Activated T-helper 1 cell treated with anti-CD3 and anti-CD28 coated beads, Interleukin-12 subunit alpha, Interleukin-12 subunit beta, Interleukin-2, Interleukin-4 antibody, amounts not matched to agents 30 ng/mL and 10 ng/mL and 1 ng/mL, durations not matched to agents 14 hours and 24 hours and 36 hours (primary cell): ENCODE measurements at regions of chr6 and their contacts with region 1.

Region 1: DNA sequence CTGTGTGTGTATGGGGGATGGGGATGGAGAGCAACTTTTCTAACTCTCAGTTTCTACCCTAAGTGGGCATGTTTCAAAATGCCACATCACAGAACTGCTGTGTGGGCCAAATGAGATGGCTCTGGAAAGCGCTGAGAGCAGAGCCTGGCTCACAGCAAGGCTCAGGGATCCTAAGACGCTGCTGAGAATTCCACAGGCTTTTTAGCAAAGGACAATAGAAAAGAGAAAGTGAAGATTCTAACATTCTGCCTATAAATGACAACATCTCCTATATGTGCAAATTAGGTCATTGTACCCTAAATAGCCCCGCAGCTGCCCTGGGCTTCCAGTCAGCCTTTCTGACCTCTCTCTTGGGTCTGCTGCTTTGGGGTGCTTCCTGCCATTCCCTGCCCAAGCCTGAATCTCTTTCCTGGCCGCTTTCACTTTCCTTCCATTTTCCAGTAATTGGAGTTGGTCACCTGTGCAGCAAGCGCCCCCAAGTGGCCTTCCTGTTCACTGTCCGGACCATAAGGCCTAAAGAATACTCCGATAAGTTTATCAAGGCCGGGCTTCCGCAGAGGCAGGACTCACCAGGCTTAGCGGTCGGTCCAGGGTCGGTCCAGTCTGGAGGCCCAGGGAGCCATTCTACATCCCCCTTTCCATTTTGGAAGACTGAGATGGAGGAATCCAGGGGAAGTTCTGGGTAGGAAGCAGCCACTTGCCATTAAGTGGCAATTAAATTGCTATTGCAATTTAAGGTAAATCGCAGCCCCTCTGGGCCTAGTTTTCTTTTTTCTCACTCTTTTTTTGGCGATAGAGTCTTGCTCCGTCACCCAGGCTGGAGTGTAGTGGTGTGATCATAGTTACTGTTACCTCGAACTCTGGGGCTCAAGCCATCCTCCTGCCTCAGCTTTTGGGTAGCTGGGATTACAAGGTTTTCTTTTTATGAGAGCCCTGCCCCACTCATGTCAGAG is 6.6 kb upstream of the DDR1 start:
- DNase-seq: peak; percentile 60
- H3K4me3 Mint-ChIP-seq: peak overlapping the region; percentile 43
- H3K27ac Mint-ChIP-seq: peak overlapping the region; percentile 75
- H3K4me1 Mint-ChIP-seq: peaks cover 43% of the 10 kb centered on the region
- H3K27me3 Mint-ChIP-seq: peaks cover 3% of the 10 kb centered on the region

Region 2: GRCh38 chr6:30678964-30679726 is 198.6 kb before region 1 on chr6:
- intact Hi-C with region 1: loop called (anchors 1 kb)
- DNase-seq: peak; percentile 85
- H3K4me3 Mint-ChIP-seq: peak overlapping the region; percentile 94
- H3K27ac Mint-ChIP-seq: peak overlapping the region; percentile 90
- H3K4me1 Mint-ChIP-seq: peaks cover 26% of the 10 kb centered on the region
- H3K27me3 Mint-ChIP-seq: no peaks in the 10 kb centered on the region

Region 3: DNA sequence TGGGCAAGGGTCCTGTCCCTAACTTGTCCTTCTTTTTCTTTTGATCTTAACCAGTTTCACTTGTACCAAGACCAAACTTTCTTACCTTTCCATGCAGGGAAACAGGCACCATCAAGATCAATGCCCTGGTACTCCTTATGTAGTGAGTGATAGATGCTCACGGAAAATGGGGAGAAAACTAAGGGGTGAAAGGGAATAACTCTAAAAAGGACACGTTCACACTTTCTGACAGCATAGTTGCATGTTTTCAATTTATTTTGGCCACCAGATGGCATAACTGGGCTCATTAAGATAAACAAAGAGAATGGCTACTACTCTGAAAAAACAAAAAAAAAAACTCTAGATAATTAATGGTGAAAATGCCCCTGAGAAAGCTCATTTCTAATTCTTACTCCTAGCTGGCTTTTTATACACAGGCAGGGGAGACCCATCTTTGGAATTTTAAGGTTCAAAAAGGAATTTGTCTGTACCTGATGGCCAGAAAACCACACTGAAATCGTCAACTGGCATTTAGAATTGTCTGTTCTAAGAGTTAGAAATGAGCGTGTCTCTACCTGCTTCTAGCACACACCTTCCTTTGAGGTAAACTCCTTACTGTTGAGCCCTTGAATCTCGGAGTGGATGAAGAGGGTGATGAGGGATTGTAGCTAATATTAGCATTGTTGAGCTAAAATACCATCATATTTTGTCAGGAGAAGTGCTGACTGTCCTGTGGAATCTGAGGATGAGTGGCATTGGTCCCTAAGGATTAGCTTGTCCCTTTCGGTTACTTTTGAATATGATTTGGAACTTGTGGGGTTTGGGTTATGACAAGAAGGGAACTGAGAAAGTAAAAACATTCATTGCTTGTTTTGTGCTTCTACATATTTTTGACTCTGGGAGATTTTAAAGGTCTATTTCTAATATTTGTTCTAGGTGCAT is 55.6 kb before region 1 on chr6:
- intact Hi-C with region 1: loop called (anchors 1 kb)
- DNase-seq: no peak
- H3K4me3 Mint-ChIP-seq: no peak overlapping the region
- H3K27ac Mint-ChIP-seq: peak overlapping the region; percentile 29
- H3K4me1 Mint-ChIP-seq: peaks cover 71% of the 10 kb centered on the region
- H3K27me3 Mint-ChIP-seq: no peaks in the 10 kb centered on the region

Region 4: GRCh38 chr6:30828027-30828960 is 49.4 kb before region 1 on chr6:
- intact Hi-C with region 1: loop called (anchors 1 kb)
- DNase-seq: peak; percentile 66
- H3K4me3 Mint-ChIP-seq: peak overlapping the region; percentile 96
- H3K27ac Mint-ChIP-seq: peak overlapping the region; percentile 98
- H3K4me1 Mint-ChIP-seq: peaks cover 65% of the 10 kb centered on the region
- H3K27me3 Mint-ChIP-seq: no peaks in the 10 kb centered on the region

Region 5: GRCh38 chr6:31079656-31080261 is 202.1 kb after region 1 on chr6:
- intact Hi-C with region 1: loop called (anchors 1 kb)
- DNase-seq: peak; percentile 58
- H3K4me3 Mint-ChIP-seq: no peak overlapping the region
- H3K27ac Mint-ChIP-seq: no peak overlapping the region
- H3K4me1 Mint-ChIP-seq: no peaks in the 10 kb centered on the region
- H3K27me3 Mint-ChIP-seq: peaks cover 17% of the 10 kb centered on the region